ENCODE measurements at regions of chr3 and their contacts with region 1.

Region 1: GRCh38 chr3:65170390-65171042 is 482.7 kb upstream of the ADAMTS9 start:
- DNase-seq: peak; percentile 88

Region 2: GRCh38 chr3:64539451-64540196 is 630.9 kb before region 1 on chr3:
- intact Hi-C with region 1: loop called (anchors 5 kb)
- DNase-seq: no peak

Region 3: GRCh38 chr3:64895991-64896895 is 274.3 kb before region 1 on chr3:
- intact Hi-C with region 1: loop called (anchors 5 kb)
- DNase-seq: no peak

Measured in cardiac septum (tissue), 1 donor.